ENCODE measurements at regions of chr17 and their contacts with region 1.

Region 1: GRCh38 chr17:51035431-51035830 is 85.2 kb downstream of the SPAG9 start:
- DNase-seq: peak in 2 of 3 donors; percentile 52 to 71
- H3K4me3 ChIP-seq: peak overlapping the region in 2 of 7 experiments; percentile 29 to 43
- H3K27ac ChIP-seq: no peak overlapping the region
- H3K4me1 ChIP-seq: peaks cover 20 to 28% (median 23%) of the 10 kb centered on the region in 4 experiments
- H3K27me3 ChIP-seq: no peaks in the 10 kb centered on the region

Region 2: DNA sequence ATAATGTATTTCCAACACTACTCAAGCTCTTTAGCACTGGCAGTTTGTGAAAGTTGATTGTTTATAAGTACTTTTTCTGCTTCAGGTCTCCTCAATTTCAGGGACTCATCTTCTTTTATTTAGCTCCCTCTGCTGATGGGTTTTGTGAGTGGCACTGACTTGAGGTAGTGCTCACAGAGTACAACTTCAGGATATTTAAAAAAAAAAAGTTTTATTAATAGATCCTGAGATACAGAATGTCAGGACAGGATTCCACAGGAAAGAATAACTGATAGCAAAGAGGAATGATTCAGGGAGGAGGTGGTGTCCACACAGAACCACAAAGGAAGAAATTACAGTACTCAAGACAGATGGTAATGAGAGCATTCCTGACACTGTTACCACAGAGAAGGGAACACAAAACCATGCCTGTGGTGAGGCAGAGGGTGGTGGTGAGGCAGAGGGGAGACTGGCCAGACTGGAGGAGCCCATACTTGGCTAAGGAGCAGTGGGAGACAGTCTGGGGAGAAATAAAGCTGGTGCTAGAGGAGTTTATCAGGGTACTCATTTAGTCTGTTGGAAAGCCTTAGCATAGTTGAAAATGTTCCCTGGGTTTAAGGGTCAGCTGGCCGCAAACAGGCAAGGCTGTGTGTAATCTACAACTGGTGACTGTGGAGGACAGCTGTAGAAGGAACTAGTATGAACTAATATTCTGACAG is 21.5 kb after region 1 on chr17:
- CTCF ChIA-PET with region 1: interaction called, 18 read pairs
- POLR2A ChIA-PET with region 1: no interaction called
- DNase-seq: peak; percentile 68 to 84 (median 81)
- H3K4me3 ChIP-seq: no peak overlapping the region
- H3K27ac ChIP-seq: peak overlapping the region in 1 of 2 experiments; percentile 12
- H3K4me1 ChIP-seq: peaks cover 0 to 11% (median 4%) of the 10 kb centered on the region in 4 experiments
- H3K27me3 ChIP-seq: no peaks in the 10 kb centered on the region

Measured in common myeloid progenitor, CD34-positive (primary cell).